Pancreas (tissue), 10 donors: ENCODE measurements at regions of chr7 and their contacts with region 1.

Region 1: DNA sequence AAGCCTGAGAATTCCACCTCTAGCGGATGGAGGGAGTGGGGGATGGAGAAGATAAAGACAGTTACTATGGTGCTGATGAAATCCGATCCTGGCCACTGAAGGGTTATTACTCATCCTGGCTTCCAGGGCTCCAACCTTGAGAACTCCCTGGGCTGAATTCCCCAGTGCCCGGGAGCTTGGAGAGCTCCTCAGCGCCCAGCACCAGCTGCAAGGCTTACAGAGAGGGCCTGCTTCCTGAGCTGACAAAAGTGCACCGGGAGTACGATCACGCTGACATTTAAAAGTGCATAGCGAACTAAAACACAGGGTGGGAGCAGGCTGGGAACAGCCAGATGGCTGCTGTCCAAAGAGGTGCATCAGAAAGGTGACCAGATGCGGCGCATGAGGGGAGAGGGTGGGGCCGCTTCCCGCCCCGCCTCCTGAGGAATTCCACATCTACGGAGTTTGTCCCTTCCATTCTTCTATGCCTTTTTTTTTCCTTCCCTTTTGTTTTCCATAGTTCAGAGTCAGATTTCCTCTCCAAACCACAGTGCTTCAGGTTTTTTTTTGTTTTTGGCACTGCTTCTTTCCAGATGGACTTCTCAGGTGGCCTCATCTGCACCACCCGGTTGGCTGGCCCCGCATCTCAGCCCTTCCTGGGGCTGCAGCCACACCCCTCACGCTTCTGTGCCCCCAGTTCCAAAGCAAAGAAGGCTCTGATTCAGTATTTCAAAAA is 62.4 kb upstream of the MKRN1 start:
- DNase-seq: peak in 2 of 6 donors; percentile 26 to 33
- ATAC-seq: peak in 3 of 4 donors; percentile 27 to 60 (median 28)
- H3K4me3 ChIP-seq: no peak overlapping the region
- H3K27ac ChIP-seq: no peak overlapping the region
- H3K4me1 ChIP-seq: peaks cover 0 to 3% (median 0%) of the 10 kb centered on the region in 3 donors
- H3K27me3 ChIP-seq: no peaks in the 10 kb centered on the region
- CTCF ChIP-seq: no peak

Region 2: DNA sequence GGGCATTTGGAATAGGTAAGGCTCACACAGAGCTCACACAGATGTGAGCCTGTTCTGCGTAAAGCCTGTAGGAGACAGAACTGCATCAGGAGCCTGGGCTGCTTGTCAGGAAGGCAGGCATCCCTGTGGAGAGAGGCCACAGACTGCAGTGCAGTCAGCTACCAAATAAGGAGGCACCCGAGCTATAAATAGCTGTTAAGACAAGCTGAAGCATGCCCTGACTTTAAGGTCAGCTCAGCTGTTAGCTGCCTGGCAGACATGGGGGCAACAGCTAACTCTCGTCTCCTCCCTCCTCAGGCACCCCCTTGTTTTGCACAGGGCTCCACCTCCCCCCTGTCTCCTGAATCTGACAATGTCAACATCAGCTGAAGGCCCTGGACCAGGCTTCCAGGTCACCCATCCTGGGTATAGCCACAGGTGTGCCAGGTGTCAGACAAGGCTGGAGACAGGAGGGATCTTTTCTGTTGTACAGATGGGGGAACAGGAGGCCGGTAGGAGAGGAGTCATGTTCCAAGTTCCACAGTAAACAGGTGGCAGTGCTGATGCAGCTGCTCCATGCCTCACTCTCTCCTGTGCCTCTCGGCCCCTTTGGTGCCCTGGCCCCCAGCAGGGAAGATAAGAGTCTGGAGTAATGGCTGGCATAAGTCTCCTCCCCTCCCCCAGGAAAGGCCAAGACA is 34.7 kb before region 1 on chr7:
- intact Hi-C with region 1: no loop called
- DNase-seq: peak in 2 of 6 donors; percentile 31 to 50
- ATAC-seq: peak; percentile 53 to 75 (median 68)
- H3K4me3 ChIP-seq: no peak overlapping the region
- H3K27ac ChIP-seq: peak overlapping the region in 1 of 4 donors; percentile 5
- H3K4me1 ChIP-seq: no peaks in the 10 kb centered on the region
- H3K27me3 ChIP-seq: no peaks in the 10 kb centered on the region
- CTCF ChIP-seq: no peak

Region 3: DNA sequence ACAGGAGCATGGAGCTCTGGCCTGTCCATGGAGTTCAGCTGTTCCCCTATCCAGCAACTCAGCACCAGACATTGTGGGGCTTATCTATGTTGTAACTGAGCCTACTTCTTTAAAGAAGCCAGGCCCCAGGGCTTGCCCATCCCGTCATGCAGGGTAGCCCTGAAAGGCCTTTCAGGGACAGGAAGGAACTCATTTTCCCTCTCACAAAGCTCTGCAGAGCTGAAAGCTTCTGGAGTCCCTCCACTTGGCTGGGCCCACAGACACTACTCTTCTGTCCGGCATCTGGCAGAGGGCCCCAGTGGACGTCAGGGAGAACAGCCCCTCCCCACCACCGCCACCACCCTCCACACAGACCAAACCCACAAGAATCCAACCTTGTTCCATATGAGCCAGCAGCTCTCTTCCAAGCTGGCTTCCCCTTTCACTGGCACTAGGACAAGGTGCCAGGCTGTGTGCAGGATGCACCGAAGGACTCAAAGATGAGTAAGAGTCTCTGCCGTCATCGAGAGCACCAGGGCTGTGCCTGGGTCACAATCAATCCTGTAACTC is 65.8 kb after region 1 on chr7:
- intact Hi-C with region 1: loop called in 1 of 3 experiments (anchors 10 kb)
- DNase-seq: peak in 2 of 6 donors; percentile 6 to 31
- ATAC-seq: peak in 3 of 4 donors; percentile 11 to 39 (median 37)
- H3K4me3 ChIP-seq: no peak overlapping the region
- H3K27ac ChIP-seq: no peak overlapping the region
- H3K4me1 ChIP-seq: no peaks in the 10 kb centered on the region
- H3K27me3 ChIP-seq: no peaks in the 10 kb centered on the region
- CTCF ChIP-seq: no peak